ENCODE measurements at regions of chr4 and their contacts with region 1.

Region 1: DNA sequence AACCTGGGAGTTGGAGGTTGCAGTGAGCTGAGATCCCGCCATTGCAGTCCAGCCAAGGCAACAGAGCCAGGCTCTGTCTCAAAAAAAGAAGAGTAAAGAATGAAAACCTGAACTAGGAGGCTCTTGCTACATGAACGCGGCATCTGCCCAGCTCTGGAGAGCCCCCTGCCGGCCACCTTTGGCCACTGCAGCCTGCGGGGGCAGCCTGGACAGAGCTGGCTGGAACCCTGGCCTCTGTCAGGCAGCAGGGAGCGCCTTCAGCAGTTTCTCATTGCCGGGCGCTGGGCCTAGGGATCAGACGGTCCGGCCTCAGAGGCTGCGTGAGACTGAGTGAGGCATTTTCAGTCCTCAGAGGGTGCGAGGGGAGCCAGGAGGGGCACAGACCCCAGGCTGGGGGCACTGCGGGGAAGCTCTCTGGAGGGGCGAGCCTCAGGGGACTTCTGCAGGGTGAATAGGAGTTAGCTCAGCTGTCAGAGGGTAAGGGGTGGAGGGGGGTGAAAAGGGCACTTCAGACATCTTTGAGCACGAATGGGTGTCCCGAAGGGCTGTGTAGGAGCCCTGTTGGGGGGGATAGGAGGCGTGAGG is 17.5 kb downstream of the DOK7 start:
- DNase-seq: peak; percentile 95
- ATAC-seq: peak; percentile 85
- H3K4me3 Mint-ChIP-seq: peak overlapping the region; percentile 53
- H3K27ac Mint-ChIP-seq: no peak overlapping the region
- H3K4me1 Mint-ChIP-seq: peaks cover 18% of the 10 kb centered on the region
- H3K27me3 Mint-ChIP-seq: peaks cover 68% of the 10 kb centered on the region
- CTCF ChIP-seq: peak; percentile 99

Region 2: DNA sequence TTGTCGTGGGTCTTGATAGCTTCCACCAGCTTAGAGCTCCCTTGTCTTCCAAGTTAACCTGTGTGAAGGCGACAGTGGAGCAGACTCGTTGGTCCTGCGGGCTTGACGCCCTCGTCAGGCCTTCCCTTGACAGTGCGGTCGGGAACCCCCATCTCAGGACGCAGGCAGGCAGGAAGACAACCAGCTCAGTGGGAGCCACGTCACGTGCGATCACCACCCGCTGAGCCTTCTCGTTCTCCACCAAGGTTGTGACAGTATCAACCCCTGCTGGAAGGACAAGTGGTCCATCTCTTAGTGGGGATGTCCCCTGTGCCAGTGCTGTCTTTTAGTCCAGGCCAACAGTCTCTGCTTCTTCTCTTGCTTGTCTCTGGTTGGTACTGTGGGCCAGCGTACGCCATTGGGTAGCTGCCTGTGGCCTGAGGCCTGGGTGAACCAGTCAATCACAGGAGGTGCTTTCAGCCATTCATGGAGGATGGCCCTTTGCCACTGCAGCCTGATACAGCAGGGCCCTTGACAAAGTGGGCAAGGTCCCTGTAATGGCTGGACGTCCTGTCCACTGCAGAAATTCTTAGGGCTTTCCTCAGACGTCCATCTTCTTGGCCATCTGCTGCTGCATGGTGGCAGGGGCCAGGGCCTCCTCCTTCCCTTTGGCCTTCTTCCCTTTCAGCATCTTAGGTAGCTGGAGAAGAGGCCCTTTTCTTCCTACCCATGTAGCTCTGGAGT is 156.4 kb before region 1 on chr4:
- CTCF ChIA-PET with region 1: interaction called, 46 read pairs
- POLR2A ChIA-PET with region 1: no interaction called
- DNase-seq: peak; percentile 78
- ATAC-seq: peak; percentile 93
- H3K4me3 Mint-ChIP-seq: no peak overlapping the region
- H3K27ac Mint-ChIP-seq: no peak overlapping the region
- H3K4me1 Mint-ChIP-seq: peaks cover 16% of the 10 kb centered on the region
- H3K27me3 Mint-ChIP-seq: no peaks in the 10 kb centered on the region
- CTCF ChIP-seq: no peak

Region 3: GRCh38 chr4:3369781-3370674 is 110.6 kb before region 1 on chr4:
- CTCF ChIA-PET with region 1: interaction called, 18 read pairs
- POLR2A ChIA-PET with region 1: no interaction called
- DNase-seq: no peak
- ATAC-seq: peak; percentile 60
- H3K4me3 Mint-ChIP-seq: peak overlapping the region; percentile 54
- H3K27ac Mint-ChIP-seq: peak overlapping the region; percentile 39
- H3K4me1 Mint-ChIP-seq: peaks cover 44% of the 10 kb centered on the region
- H3K27me3 Mint-ChIP-seq: peaks cover 25% of the 10 kb centered on the region
- CTCF ChIP-seq: no peak

Region 4: DNA sequence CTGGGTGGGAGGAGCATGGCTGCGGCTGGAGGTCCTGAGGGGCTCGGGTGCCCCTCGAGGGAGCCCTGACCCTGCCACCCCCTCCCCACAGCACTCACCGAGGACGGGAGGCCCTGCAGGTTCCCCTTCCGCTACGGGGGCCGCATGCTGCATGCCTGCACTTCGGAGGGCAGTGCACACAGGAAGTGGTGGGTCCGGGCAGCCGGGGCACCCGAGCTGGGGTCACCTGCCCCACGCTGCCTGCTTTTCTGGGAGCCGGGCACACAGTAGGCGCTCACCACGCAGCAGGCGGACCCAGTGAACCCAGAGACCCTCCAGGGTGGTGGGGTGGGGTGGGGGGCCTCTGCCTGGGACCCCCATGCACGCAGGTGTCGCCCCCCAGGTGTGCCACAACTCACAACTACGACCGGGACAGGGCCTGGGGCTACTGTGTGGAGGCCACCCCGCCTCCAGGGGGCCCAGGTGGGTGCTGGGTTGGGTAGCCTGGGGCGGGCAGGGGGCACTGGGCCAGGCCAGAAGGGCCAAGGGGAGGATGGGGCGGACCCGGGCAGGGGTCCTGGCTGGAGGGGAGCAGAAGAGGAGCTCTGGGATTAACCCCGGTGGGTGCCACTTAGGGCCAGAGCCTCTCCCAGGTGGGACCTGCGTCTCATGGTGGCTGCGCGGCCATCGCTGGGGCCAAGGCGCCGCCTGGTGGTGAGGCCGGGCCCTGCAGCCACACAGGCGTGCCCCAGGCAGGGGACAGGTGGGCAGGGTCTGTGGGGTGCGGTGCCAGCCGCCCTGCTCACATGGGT is 37.5 kb before region 1 on chr4:
- CTCF ChIA-PET with region 1: interaction called, 35 read pairs
- POLR2A ChIA-PET with region 1: no interaction called
- DNase-seq: peak; percentile 77
- ATAC-seq: peak; percentile 82
- H3K4me3 Mint-ChIP-seq: no peak overlapping the region
- H3K27ac Mint-ChIP-seq: no peak overlapping the region
- H3K4me1 Mint-ChIP-seq: no peaks in the 10 kb centered on the region
- H3K27me3 Mint-ChIP-seq: no peaks in the 10 kb centered on the region
- CTCF ChIP-seq: peak; percentile 100

Region 5: GRCh38 chr4:3461478-3462291 is 18.9 kb before region 1 on chr4:
- CTCF ChIA-PET with region 1: interaction called, 42 read pairs
- POLR2A ChIA-PET with region 1: no interaction called
- DNase-seq: no peak
- ATAC-seq: no peak
- H3K4me3 Mint-ChIP-seq: no peak overlapping the region
- H3K27ac Mint-ChIP-seq: no peak overlapping the region
- H3K4me1 Mint-ChIP-seq: no peaks in the 10 kb centered on the region
- H3K27me3 Mint-ChIP-seq: peaks cover 67% of the 10 kb centered on the region
- CTCF ChIP-seq: no peak

Region 6: DNA sequence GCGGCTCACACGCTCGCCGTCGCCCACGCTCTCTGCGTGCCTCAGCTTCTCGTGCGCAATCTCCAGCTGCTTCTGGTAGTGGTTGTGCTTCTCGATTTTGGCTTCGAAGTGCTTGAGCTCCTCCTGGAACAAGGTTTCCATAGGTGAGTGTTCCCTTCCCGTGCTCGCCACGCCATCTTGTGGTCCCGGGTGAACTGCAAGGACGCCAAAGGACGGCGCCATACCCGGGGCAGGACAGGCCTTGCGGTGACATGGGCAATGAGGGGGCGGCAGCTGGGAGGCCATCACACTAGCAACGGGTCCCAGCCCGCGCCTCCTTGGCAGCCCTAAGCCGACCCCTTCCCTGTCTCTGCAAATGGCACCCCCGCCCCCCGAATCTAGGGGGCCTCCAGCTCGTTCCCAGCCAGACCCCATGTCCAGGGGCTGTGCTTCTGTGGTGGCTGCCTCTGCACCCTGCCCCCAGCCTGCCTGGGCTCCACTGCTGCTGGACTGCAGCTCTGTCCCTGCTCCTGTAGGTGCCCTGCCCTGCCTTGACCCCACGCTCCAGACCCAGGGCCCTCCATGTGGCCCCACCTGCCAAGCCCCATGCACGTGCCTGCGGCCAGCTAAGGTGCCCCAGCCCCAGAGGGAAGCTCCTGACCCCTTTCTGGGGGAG is 34.3 kb after region 1 on chr4:
- CTCF ChIA-PET with region 1: interaction called, 54 read pairs
- POLR2A ChIA-PET with region 1: no interaction called
- DNase-seq: peak; percentile 70
- ATAC-seq: peak; percentile 78
- H3K4me3 Mint-ChIP-seq: no peak overlapping the region
- H3K27ac Mint-ChIP-seq: no peak overlapping the region
- H3K4me1 Mint-ChIP-seq: peaks cover 4% of the 10 kb centered on the region; the same call in 1 of the 2 replicates
- H3K27me3 Mint-ChIP-seq: no peaks in the 10 kb centered on the region
- CTCF ChIP-seq: peak; percentile 21; the same call in 1 of the 2 replicates

Region 7: DNA sequence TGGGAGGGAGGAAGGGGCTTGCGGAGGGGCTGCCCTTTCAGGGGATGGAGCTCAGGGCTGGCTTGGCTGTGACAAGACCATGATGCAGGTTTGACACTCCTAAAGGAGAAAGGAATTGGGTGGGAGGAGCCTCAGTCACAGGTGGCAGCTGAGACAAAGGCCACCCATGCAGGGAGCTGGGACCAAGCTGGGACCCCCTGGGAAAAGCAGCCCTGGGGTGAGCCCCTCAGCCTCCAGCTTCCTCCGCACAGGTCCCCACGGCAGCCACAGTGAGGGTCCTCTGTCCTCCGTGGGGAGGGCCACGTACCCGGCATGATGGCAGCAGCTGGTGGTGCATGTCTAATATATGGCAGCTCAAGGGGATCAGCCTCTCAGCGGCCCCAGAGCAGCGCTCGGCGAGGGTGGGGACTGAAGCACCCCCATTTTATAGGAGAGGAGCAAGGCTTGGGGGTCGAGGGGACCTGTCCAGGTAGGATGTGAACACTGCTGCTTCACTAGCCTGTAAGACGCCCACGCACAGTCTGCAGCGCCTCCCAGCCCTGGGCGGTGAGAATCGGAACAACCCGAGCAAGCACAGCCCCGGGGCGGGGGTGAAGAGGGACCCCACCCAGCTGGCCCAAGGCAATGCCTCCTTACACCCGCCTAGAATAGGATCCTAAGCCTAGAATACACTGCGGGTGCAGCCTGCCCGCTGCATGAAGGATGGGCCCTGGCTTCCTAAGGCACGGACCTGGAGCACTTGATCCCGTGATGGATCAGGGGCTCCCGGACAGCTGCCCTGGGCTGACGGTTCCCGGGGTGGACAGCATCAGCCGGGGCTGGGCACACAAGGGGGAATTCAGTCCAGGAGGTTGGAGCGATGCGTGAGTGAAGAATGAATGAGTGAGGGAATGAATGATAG is 303.0 kb after region 1 on chr4:
- CTCF ChIA-PET with region 1: interaction called, 15 read pairs
- POLR2A ChIA-PET with region 1: no interaction called
- DNase-seq: peak; percentile 78
- ATAC-seq: peak; percentile 80
- H3K4me3 Mint-ChIP-seq: no peak overlapping the region
- H3K27ac Mint-ChIP-seq: no peak overlapping the region
- H3K4me1 Mint-ChIP-seq: peaks cover 3% of the 10 kb centered on the region
- H3K27me3 Mint-ChIP-seq: no peaks in the 10 kb centered on the region
- CTCF ChIP-seq: peak; percentile 53

Measured in WTC11 (cell line).